Heart left ventricle (tissue), 16 donors: ENCODE measurements at regions of chrX and their contacts with region 1.

Region 1: GRCh38 chrX:65595460-65595876 is 60.9 kb upstream of the LAS1L start:
- DNase-seq: peak; percentile 92 to 96 (median 93)
- ATAC-seq: peak; percentile 91 to 97 (median 94)
- H3K4me3 ChIP-seq: no peak overlapping the region
- H3K27ac ChIP-seq: peak overlapping the region; percentile 54 to 89 (median 83)
- H3K4me1 ChIP-seq: peaks cover 0 to 40% (median 9%) of the 10 kb centered on the region in 12 donors
- H3K27me3 ChIP-seq: peaks cover 0 to 20% (median 0%) of the 10 kb centered on the region in 9 donors
- CTCF ChIP-seq: peak; percentile 88 to 100 (median 96)
- POLR2A ChIP-seq: no peak

Region 2: GRCh38 chrX:65537229-65537628 is 58.2 kb before region 1 on chrX:
- intact Hi-C with region 1: no loop called
- DNase-seq: no peak
- ATAC-seq: no peak
- H3K4me3 ChIP-seq: no peak overlapping the region
- H3K27ac ChIP-seq: no peak overlapping the region
- H3K4me1 ChIP-seq: peaks cover 0 to 13% (median 8%) of the 10 kb centered on the region in 12 donors
- H3K27me3 ChIP-seq: peaks cover 0 to 16% (median 0%) of the 10 kb centered on the region in 9 donors
- CTCF ChIP-seq: no peak
- POLR2A ChIP-seq: no peak

Region 3: GRCh38 chrX:65644621-65645270 is 49.3 kb after region 1 on chrX:
- intact Hi-C with region 1: loop called in 5 of 10 experiments (anchors 5 kb)
- DNase-seq: peak; percentile 79 to 92 (median 85)
- ATAC-seq: peak; percentile 99 to 100 (median 99)
- H3K4me3 ChIP-seq: no peak overlapping the region
- H3K27ac ChIP-seq: peak overlapping the region; percentile 16 to 86 (median 72)
- H3K4me1 ChIP-seq: peaks cover 0 to 33% (median 21%) of the 10 kb centered on the region in 12 donors
- H3K27me3 ChIP-seq: peaks cover 0 to 2% (median 0%) of the 10 kb centered on the region in 9 donors
- CTCF ChIP-seq: no peak
- POLR2A ChIP-seq: no peak

Region 4: DNA sequence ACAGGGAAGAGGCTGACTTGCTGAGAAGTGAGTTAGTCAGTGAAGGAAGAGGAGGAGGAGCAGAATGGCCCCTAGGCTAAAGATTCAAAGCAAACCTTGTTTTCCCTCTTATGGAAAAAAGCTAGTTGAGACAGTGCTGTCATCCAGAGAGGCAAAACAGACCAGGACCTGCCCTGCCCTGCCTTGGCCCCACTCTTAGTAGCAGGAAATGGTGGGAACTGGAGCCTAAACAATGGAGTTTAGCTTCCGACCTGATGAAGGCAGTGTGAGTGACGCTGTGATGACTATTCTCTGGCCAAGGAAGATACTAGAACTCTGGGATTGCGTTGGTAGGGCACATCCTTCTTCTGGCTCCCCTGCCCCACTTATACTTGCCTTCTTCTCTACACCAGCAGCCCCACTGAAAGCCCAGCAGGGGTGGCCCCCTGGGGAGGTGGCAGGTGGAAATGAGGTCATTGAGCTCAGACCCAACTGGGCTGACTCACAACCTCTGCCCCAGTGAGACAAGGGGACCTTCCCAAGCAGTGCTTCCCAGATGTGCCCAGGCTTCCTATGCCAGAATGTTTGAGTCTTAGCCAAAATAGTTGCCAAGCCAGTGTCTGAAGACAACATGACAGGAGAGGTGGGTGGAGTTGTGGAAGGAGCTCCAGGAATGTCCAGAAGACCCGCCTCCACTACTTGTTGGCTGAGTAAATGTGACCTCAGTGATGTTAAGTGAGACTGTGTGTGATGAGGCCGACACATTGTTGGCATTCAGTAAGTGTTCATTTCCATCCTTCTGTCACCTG is 110.8 kb after region 1 on chrX:
- intact Hi-C with region 1: loop called in 9 of 10 experiments (anchors 2 to 10 kb)
- DNase-seq: peak; percentile 45 to 79 (median 61)
- ATAC-seq: peak; percentile 84 to 92 (median 86)
- H3K4me3 ChIP-seq: no peak overlapping the region
- H3K27ac ChIP-seq: peak overlapping the region; percentile 61 to 85 (median 78)
- H3K4me1 ChIP-seq: peaks cover 0 to 82% (median 50%) of the 10 kb centered on the region in 12 donors
- H3K27me3 ChIP-seq: no peaks in the 10 kb centered on the region
- CTCF ChIP-seq: no peak
- POLR2A ChIP-seq: no peak

Region 5: DNA sequence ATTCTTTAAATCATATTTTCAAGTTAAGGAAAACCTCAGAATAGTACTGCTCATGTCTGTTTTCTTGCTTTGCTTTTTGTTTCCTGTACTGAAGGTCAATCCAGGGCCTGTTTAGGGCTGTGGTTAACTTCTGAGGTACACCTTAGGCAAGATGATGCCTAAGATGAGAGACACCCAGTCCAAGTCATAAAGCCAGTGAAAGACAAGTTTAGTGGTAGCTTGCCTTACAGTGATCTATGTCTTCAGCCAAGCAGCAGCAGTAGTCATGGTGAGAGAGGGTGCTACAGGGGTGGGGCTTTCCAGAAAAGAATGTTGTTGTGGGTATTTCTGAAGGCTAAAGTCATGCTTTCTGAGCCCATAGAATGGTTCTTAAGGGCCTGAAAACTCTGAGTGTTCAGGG is 270.7 kb after region 1 on chrX:
- intact Hi-C with region 1: loop called in 1 of 10 experiments (anchors 10 kb)
- DNase-seq: no peak
- ATAC-seq: no peak
- H3K4me3 ChIP-seq: no peak overlapping the region
- H3K27ac ChIP-seq: no peak overlapping the region
- H3K4me1 ChIP-seq: no peaks in the 10 kb centered on the region
- H3K27me3 ChIP-seq: peaks cover 0 to 13% (median 0%) of the 10 kb centered on the region in 9 donors
- CTCF ChIP-seq: no peak
- POLR2A ChIP-seq: no peak